Naive thymus-derived CD8-positive, alpha-beta T cell (primary cell): ENCODE measurements at regions of chr14 and their contacts with region 1.

Region 1: DNA sequence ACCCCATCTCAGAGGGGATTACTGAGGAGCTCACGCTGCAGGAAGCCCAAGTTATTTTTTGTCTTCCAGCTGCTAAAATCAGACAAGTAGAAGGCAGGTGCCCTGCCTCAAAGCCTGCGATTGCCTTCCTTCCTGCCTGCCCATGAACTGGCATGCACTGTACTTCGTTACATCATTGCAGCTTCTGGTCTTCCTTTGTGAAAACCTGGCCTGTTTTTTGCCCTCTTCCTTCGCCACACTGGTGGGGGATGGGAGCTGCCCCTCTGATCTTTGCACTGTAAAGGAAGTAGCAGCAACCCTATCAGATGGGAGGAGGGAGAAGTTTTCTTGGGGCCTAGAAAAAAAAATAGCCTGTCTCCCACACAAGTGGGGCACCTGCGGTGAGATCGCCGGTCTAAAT is 1098.7 kb downstream of the BCL11B start:
- DNase-seq: peak; percentile 28 to 89 (median 72)
- ATAC-seq: peak; percentile 60 to 81
- H3K4me3 Mint-ChIP-seq: peak overlapping the region; percentile 66 to 91 (median 87)
- H3K27ac Mint-ChIP-seq: peak overlapping the region; percentile 90 to 99 (median 97)
- H3K4me1 Mint-ChIP-seq: peaks cover 57 to 100% (median 98%) of the 10 kb centered on the region in 4 donors
- H3K27me3 Mint-ChIP-seq: no peaks in the 10 kb centered on the region

Region 2: GRCh38 chr14:98144964-98145363 is 28.3 kb before region 1 on chr14:
- POLR2A ChIA-PET with region 1: interaction called, 343 read pairs
- DNase-seq: no peak
- ATAC-seq: no peak
- H3K4me3 Mint-ChIP-seq: peak overlapping the region in 7 of 10 donors; percentile 18 to 66 (median 40)
- H3K27ac Mint-ChIP-seq: peak overlapping the region; percentile 11 to 97 (median 84)
- H3K4me1 Mint-ChIP-seq: peaks cover 43 to 71% (median 64%) of the 10 kb centered on the region in 4 donors
- H3K27me3 Mint-ChIP-seq: no peaks in the 10 kb centered on the region

Region 3: GRCh38 chr14:98189062-98189461 is 15.8 kb after region 1 on chr14:
- POLR2A ChIA-PET with region 1: interaction called, 361 read pairs
- DNase-seq: peak in 2 of 10 donors; percentile 48
- ATAC-seq: peak; percentile 24 to 26
- H3K4me3 Mint-ChIP-seq: peak overlapping the region; percentile 58 to 85 (median 70)
- H3K27ac Mint-ChIP-seq: peak overlapping the region; percentile 95 to 100 (median 98)
- H3K4me1 Mint-ChIP-seq: peaks cover 62 to 99% (median 97%) of the 10 kb centered on the region in 4 donors
- H3K27me3 Mint-ChIP-seq: no peaks in the 10 kb centered on the region

Region 4: DNA sequence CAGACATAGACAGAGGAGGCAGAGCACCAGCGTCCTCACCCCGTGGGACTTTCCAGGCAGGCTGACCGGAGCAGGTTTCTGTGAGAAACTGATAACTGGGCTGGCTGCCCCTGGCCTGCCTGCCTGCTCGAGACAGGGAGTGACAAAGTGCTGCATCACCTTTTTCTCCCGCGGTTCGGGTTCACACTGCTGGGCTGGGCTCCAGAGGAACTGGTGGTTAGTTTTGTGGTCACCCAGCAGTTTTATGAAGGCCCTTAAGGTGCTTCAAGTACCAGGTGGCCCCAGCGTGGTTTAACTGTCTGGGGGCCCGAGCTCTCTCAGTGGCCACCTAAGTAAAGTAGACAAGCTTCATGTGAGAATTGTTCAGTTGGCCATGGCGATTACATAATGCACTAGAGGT is 25.1 kb after region 1 on chr14:
- POLR2A ChIA-PET with region 1: interaction called, 361 read pairs
- DNase-seq: peak in 3 of 10 donors; percentile 31 to 45 (median 42)
- ATAC-seq: peak; percentile 42 to 62
- H3K4me3 Mint-ChIP-seq: peak overlapping the region; percentile 20 to 87 (median 70)
- H3K27ac Mint-ChIP-seq: peak overlapping the region; percentile 70 to 100 (median 96)
- H3K4me1 Mint-ChIP-seq: peaks cover 57 to 99% (median 89%) of the 10 kb centered on the region in 4 donors
- H3K27me3 Mint-ChIP-seq: no peaks in the 10 kb centered on the region

Region 5: GRCh38 chr14:98203421-98203820 is 30.1 kb after region 1 on chr14:
- POLR2A ChIA-PET with region 1: interaction called, 10 read pairs
- DNase-seq: peak in 4 of 10 donors; percentile 26 to 69 (median 59)
- ATAC-seq: peak; percentile 32 to 46
- H3K4me3 Mint-ChIP-seq: peak overlapping the region; percentile 4 to 91 (median 81)
- H3K27ac Mint-ChIP-seq: peak overlapping the region; percentile 69 to 100 (median 96)
- H3K4me1 Mint-ChIP-seq: peaks cover 62 to 97% (median 90%) of the 10 kb centered on the region in 4 donors
- H3K27me3 Mint-ChIP-seq: no peaks in the 10 kb centered on the region

Region 6: DNA sequence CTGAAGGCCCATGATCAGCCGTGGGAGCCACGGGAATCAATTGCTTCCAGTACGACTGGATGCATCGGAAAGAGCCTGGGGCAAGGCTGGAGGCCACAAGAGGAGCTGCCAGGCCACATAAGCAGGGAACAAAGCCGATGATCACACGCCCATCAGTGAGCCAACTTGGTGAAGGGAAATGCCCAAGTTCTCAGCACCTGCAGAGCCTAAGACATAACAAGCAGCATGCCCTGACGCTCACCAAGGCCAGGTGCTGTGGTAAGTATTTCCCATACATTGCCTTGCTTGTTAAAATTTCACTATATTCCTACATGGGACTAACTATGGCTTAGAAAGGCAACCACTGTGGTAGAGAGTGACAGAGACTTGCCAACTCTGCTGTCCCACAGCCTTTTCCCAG is 542.8 kb after region 1 on chr14:
- POLR2A ChIA-PET with region 1: interaction called, 13 read pairs
- DNase-seq: no peak
- ATAC-seq: no peak
- H3K4me3 Mint-ChIP-seq: no peak overlapping the region
- H3K27ac Mint-ChIP-seq: peak overlapping the region in 1 of 10 donors; percentile 28
- H3K4me1 Mint-ChIP-seq: peaks cover 7 to 21% (median 9%) of the 10 kb centered on the region in 4 donors
- H3K27me3 Mint-ChIP-seq: no peaks in the 10 kb centered on the region

Region 7: DNA sequence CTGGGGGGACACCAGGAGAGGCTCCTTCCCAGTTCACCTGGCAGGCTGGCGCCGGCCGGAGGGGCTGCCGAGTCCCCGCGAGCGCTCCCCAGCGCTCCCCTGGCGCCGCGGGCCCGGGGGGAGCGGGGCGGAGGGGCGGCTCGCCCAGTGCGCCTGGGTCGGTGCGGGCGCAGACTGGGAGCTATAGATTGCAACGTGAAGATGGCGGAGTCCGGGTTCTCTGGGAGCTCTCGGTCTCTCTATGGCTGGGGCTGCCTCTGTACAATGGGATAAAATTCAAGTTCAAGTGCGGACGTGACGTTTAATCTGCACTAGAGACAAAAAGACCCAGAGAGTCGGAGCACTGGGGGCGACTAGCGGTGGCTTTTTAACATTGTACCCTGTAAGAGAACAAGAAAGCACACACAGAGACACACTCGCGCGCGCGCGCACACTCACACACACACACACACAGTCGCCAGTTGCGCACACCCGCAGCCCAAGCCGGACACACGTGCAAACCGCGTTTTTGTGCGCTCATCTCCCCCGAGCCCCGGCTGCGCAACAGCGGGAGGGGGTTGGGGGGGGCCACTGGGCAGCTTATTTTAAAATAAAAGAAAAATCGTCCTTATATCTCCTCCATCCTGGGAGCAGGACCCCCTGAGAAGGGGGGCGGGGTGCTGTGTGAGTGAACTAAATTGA is 1098.8 kb after region 1 on chr14 and contains the start of gene BCL11B:
- POLR2A ChIA-PET with region 1: interaction called, 26 read pairs
- DNase-seq: peak; percentile 73 to 96 (median 87)
- ATAC-seq: peak; percentile 69 to 79
- H3K4me3 Mint-ChIP-seq: peak within 1 kb of the TSS; percentile 90 to 100 (median 96)
- H3K27ac Mint-ChIP-seq: peak within 1 kb of the TSS; percentile 93 to 99 (median 96)
- H3K4me1 Mint-ChIP-seq: peaks cover 13 to 56% (median 32%) of the 10 kb centered on the region in 4 donors
- H3K27me3 Mint-ChIP-seq: peaks cover 0 to 9% (median 0%) of the 10 kb centered on the region in 5 donors
- polyA plus RNA-seq, gene BCL11B: 8.2 to 12.1 (median 9.5) TPM